ENCODE measurements at regions of chr19 and their contacts with region 1.

Region 1: GRCh38 chr19:10501971-10502523 is 1.1 kb downstream of the KEAP1 start:
- DNase-seq: peak; percentile 45
- ATAC-seq: peak; percentile 3
- H3K4me3 Mint-ChIP-seq: peak overlapping the region; percentile 83
- H3K27ac Mint-ChIP-seq: peak overlapping the region; percentile 93
- H3K4me1 Mint-ChIP-seq: peaks cover 26% of the 10 kb centered on the region
- H3K27me3 Mint-ChIP-seq: 0 out of 2 replicates have a peak, but pooled peaks cover 4% of the 10 kb centered on the region
- CTCF ChIP-seq: no peak

Region 2: GRCh38 chr19:10390652-10391286 is 111.3 kb before region 1 on chr19:
- CTCF ChIA-PET with region 1: no interaction called
- POLR2A ChIA-PET with region 1: no interaction called
- DNase-seq: peak; percentile 87
- ATAC-seq: peak; percentile 71
- H3K4me3 Mint-ChIP-seq: no peak overlapping the region
- H3K27ac Mint-ChIP-seq: no peak overlapping the region
- H3K4me1 Mint-ChIP-seq: peaks cover 5% of the 10 kb centered on the region; the same call in 1 of the 2 replicates
- H3K27me3 Mint-ChIP-seq: no peaks in the 10 kb centered on the region
- CTCF ChIP-seq: peak; percentile 85

Region 3: GRCh38 chr19:10424011-10424637 is 77.9 kb before region 1 on chr19:
- CTCF ChIA-PET with region 1: no interaction called
- POLR2A ChIA-PET with region 1: no interaction called
- DNase-seq: peak; percentile 92
- ATAC-seq: peak; percentile 72
- H3K4me3 Mint-ChIP-seq: peak overlapping the region; percentile 66
- H3K27ac Mint-ChIP-seq: no peak overlapping the region
- H3K4me1 Mint-ChIP-seq: peaks cover 10% of the 10 kb centered on the region
- H3K27me3 Mint-ChIP-seq: peaks cover 96% of the 10 kb centered on the region
- CTCF ChIP-seq: peak; percentile 93

Region 4: GRCh38 chr19:10551698-10552301 is 49.8 kb after region 1 on chr19:
- CTCF ChIA-PET with region 1: interaction called, 23 read pairs
- POLR2A ChIA-PET with region 1: interaction called, 8 read pairs
- DNase-seq: peak; percentile 41
- ATAC-seq: peak; percentile 38
- H3K4me3 Mint-ChIP-seq: no peak overlapping the region
- H3K27ac Mint-ChIP-seq: no peak overlapping the region
- H3K4me1 Mint-ChIP-seq: no peaks in the 10 kb centered on the region
- H3K27me3 Mint-ChIP-seq: no peaks in the 10 kb centered on the region
- CTCF ChIP-seq: no peak

Region 5: DNA sequence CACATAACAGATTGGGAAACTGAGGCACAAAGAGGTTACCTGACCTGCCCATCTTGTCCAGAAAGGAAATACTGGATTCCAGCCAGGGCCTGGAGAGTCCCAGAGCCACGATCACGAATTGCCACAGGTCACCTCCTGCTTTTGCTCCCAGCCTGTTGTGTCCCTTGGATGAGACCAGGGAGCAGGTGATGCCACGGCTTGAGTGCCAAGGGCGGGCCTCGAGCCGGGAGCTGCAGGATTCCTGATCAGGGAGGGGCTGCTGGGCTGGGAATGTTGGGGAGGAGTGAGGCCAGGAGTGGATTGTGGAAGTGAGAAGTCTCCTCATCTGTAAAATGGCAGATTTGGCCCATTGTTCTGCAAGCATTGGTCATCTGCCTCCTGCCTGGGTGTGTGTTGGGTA is 245.2 kb after region 1 on chr19:
- CTCF ChIA-PET with region 1: no interaction called
- POLR2A ChIA-PET with region 1: no interaction called
- DNase-seq: no peak
- ATAC-seq: no peak
- H3K4me3 Mint-ChIP-seq: no peak overlapping the region
- H3K27ac Mint-ChIP-seq: peak overlapping the region; percentile 69
- H3K4me1 Mint-ChIP-seq: peaks cover 25% of the 10 kb centered on the region
- H3K27me3 Mint-ChIP-seq: no peaks in the 10 kb centered on the region
- CTCF ChIP-seq: no peak